Naive thymus-derived CD4-positive, alpha-beta T cell (primary cell): ENCODE measurements at regions of chr2 and their contacts with region 1.

Region 1: DNA sequence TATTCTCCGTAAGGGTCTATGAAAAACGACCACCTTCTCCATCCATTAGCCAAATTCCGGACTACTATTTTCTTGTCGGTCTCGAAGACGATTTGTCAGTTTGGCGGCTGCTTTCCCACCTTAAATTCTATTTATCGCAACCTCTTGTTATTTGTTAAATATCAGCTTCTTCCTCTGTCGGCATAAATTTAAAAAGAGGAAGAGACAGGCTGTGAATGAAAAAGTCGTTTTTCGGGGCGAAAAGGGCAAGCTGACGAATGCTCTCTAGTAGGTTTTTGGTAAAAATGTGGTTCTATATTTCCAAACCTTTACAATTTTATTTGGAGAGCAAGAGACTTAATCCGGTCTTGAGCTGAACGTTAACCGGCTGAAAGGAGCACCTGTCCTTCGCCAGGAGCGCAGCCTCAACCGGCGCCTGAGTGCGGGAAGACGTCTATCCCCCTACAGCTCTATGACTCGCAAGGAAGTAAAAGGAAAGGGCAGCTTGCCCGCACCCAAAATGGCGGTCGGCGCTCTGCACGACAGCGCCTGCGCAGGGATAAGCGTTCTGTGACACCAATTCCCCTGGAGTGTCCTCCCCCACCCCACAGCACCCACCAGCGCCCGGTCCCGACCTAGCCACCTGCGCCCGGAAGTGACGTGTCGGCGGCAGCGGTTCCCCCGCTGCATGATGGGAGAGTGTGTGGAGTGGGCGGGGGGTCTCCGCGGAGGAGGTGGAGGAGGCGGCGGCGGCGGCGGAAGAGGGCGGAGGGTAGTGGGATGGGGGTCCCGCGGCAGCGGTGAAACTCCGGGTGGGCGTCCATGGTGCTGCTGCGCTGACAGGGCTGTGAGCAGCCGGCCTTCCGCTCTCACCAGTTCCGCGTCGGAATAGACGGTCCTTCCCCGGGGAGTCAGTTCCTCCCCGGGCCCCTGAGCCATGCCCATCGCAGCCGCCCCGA is at the start of gene AFTPH:
- DNase-seq: peak; percentile 96 to 100 (median 99)
- ATAC-seq: peak; percentile 98
- H3K4me3 ChIP-seq: peak within 1 kb of the TSS; percentile 99
- H3K4me3 Mint-ChIP-seq: peak within 1 kb of the TSS; percentile 94 to 100 (median 99)
- H3K27ac ChIP-seq: peak within 1 kb of the TSS; percentile 85
- H3K27ac Mint-ChIP-seq: peak within 1 kb of the TSS; percentile 93 to 99 (median 99)
- H3K4me1 ChIP-seq: peaks cover 22 to 25% of the 10 kb centered on the region in 2 donors
- H3K4me1 Mint-ChIP-seq: peaks cover 10 to 51% (median 43%) of the 10 kb centered on the region in 7 donors
- H3K27me3 ChIP-seq: no peaks in the 10 kb centered on the region
- H3K27me3 Mint-ChIP-seq: peaks cover 0 to 12% (median 0%) of the 10 kb centered on the region in 5 donors
- total RNA-seq, gene AFTPH: 25.2 to 46.2 (median 37.0) TPM

Region 2: GRCh38 chr2:62705007-62705829 is 1818.7 kb before region 1 on chr2 and contains the start of gene EHBP1:
- CTCF ChIA-PET with region 1: no interaction called
- POLR2A ChIA-PET with region 1: no interaction called
- intact Hi-C with region 1: loop called in 1 of 2 experiments (anchors 10 kb)
- DNase-seq: peak; percentile 95 to 99 (median 98)
- ATAC-seq: peak; percentile 98
- H3K4me3 ChIP-seq: peak within 1 kb of the TSS; percentile 82
- H3K4me3 Mint-ChIP-seq: peak within 1 kb of the TSS; percentile 83 to 98 (median 92)
- H3K27ac ChIP-seq: peak within 1 kb of the TSS; percentile 72
- H3K27ac Mint-ChIP-seq: peak within 1 kb of the TSS; percentile 76 to 93 (median 84)
- H3K4me1 ChIP-seq: peaks cover 0 to 25% of the 10 kb centered on the region in 2 donors
- H3K4me1 Mint-ChIP-seq: peaks cover 24 to 48% (median 31%) of the 10 kb centered on the region in 7 donors
- H3K27me3 ChIP-seq: no peaks in the 10 kb centered on the region
- H3K27me3 Mint-ChIP-seq: peaks cover 0 to 13% (median 0%) of the 10 kb centered on the region in 5 donors
- total RNA-seq, gene EHBP1: 23.8 to 31.5 (median 30.0) TPM

Region 3: GRCh38 chr2:64052468-64053241 is 471.3 kb before region 1 on chr2:
- CTCF ChIA-PET with region 1: interaction called, 6 read pairs
- POLR2A ChIA-PET with region 1: no interaction called
- intact Hi-C with region 1: loop called (anchors 1 kb)
- DNase-seq: peak in 7 of 9 donors; percentile 14 to 63 (median 44)
- ATAC-seq: peak; percentile 48
- H3K4me3 ChIP-seq: no peak overlapping the region
- H3K4me3 Mint-ChIP-seq: peak overlapping the region in 9 of 10 donors; percentile 23 to 68 (median 53)
- H3K27ac ChIP-seq: no peak overlapping the region
- H3K27ac Mint-ChIP-seq: peak overlapping the region in 8 of 9 donors; percentile 38 to 92 (median 85)
- H3K4me1 ChIP-seq: peaks cover 3 to 37% of the 10 kb centered on the region in 2 donors
- H3K4me1 Mint-ChIP-seq: peaks cover 35 to 62% (median 54%) of the 10 kb centered on the region in 7 donors
- H3K27me3 ChIP-seq: no peaks in the 10 kb centered on the region
- H3K27me3 Mint-ChIP-seq: peaks cover 0 to 3% (median 0%) of the 10 kb centered on the region in 5 donors

Region 4: DNA sequence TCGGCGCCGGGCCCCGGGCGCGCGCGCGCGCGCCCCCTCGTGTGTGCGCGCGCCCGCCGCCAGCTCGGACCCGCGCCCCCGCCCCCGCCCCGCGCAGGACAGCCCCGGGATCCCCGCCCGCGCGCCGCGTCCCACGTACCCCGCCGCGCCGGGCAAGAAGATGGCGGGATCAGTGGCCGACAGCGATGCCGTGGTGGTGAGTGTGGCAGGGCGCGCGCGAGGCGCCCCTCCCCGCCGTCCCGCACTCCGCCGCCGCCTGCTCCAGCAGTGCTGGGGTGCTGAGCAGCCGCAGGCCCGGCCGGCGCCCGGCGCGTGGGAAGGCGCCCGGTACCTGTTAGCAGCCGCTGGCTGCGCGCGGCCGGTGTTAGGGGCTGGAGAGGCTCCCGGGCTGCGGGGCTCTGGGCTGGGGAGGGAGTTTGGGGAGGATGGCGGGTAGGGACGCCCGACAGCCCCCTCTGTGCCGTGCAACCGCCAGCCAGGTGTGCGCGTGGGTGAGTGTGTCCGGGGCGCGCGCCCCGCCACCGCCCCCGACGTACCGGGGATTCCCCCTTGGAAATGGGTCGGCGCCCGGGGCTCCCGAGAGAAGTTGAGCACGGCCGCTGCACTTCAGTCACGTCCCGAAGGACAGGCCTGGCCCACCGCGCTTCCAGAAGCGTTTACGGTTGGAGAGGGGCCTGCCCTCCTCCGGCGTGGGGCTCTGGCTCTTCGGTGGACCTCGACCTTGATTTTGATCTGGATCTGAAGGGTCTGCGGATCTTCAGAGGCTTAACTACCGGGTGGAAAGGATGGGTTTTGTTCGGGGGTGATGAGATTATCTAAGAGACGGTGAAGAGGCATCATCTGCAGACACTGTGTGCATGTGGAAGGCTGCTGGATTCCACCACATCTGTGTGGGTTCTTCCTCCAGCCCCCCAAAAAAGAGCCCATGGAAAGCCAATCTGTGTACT is 69.3 kb before region 1 on chr2:
- CTCF ChIA-PET with region 1: no interaction called
- POLR2A ChIA-PET with region 1: no interaction called
- intact Hi-C with region 1: no loop called
- DNase-seq: peak; percentile 14 to 68 (median 43)
- ATAC-seq: peak; percentile 82
- H3K4me3 ChIP-seq: peak overlapping the region; percentile 44
- H3K4me3 Mint-ChIP-seq: peak overlapping the region; percentile 75 to 91 (median 86)
- H3K27ac ChIP-seq: no peak overlapping the region
- H3K27ac Mint-ChIP-seq: peak overlapping the region in 7 of 9 donors; percentile 34 to 84 (median 62)
- H3K4me1 ChIP-seq: peaks cover 0 to 4% of the 10 kb centered on the region in 2 donors
- H3K4me1 Mint-ChIP-seq: peaks cover 0 to 16% (median 11%) of the 10 kb centered on the region in 7 donors
- H3K27me3 ChIP-seq: peaks cover 0 to 2% of the 10 kb centered on the region in 2 donors
- H3K27me3 Mint-ChIP-seq: peaks cover 0 to 50% (median 8%) of the 10 kb centered on the region in 5 donors

Region 5: GRCh38 chr2:64586883-64587481 is 63.0 kb after region 1 on chr2:
- CTCF ChIA-PET with region 1: no interaction called
- POLR2A ChIA-PET with region 1: interaction called, 4 read pairs
- intact Hi-C with region 1: loop called in 1 of 2 experiments (anchors 1 kb)
- DNase-seq: peak in 6 of 9 donors; percentile 30 to 55 (median 42)
- ATAC-seq: peak; percentile 72
- H3K4me3 ChIP-seq: no peak overlapping the region
- H3K4me3 Mint-ChIP-seq: no peak overlapping the region
- H3K27ac ChIP-seq: no peak overlapping the region
- H3K27ac Mint-ChIP-seq: peak overlapping the region in 1 of 9 donors; percentile 64
- H3K4me1 ChIP-seq: no peaks in the 10 kb centered on the region
- H3K4me1 Mint-ChIP-seq: peaks cover 0 to 14% (median 5%) of the 10 kb centered on the region in 7 donors
- H3K27me3 ChIP-seq: no peaks in the 10 kb centered on the region
- H3K27me3 Mint-ChIP-seq: no peaks in the 10 kb centered on the region

Region 6: GRCh38 chr2:64750817-64751285 is 226.9 kb after region 1 on chr2:
- CTCF ChIA-PET with region 1: no interaction called
- POLR2A ChIA-PET with region 1: interaction called, 12 read pairs
- intact Hi-C with region 1: loop called (anchors 1 kb)
- DNase-seq: peak in 8 of 9 donors; percentile 87 to 97 (median 96)
- ATAC-seq: peak; percentile 90
- H3K4me3 ChIP-seq: peak overlapping the region; percentile 98
- H3K4me3 Mint-ChIP-seq: peak overlapping the region; percentile 91 to 100 (median 99)
- H3K27ac ChIP-seq: peak overlapping the region; percentile 91
- H3K27ac Mint-ChIP-seq: peak overlapping the region; percentile 91 to 99 (median 96)
- H3K4me1 ChIP-seq: peaks cover 3 to 13% of the 10 kb centered on the region in 2 donors
- H3K4me1 Mint-ChIP-seq: peaks cover 5 to 34% (median 29%) of the 10 kb centered on the region in 7 donors
- H3K27me3 ChIP-seq: no peaks in the 10 kb centered on the region
- H3K27me3 Mint-ChIP-seq: no peaks in the 10 kb centered on the region

Region 7: GRCh38 chr2:64914735-64915509 is 391.0 kb after region 1 on chr2:
- CTCF ChIA-PET with region 1: no interaction called
- POLR2A ChIA-PET with region 1: no interaction called
- intact Hi-C with region 1: loop called in 1 of 2 experiments (anchors 1 kb)
- DNase-seq: no peak
- ATAC-seq: peak; percentile 51
- H3K4me3 ChIP-seq: no peak overlapping the region
- H3K4me3 Mint-ChIP-seq: no peak overlapping the region
- H3K27ac ChIP-seq: no peak overlapping the region
- H3K27ac Mint-ChIP-seq: peak overlapping the region in 1 of 9 donors; percentile 34
- H3K4me1 ChIP-seq: peaks cover 6 to 15% of the 10 kb centered on the region in 2 donors
- H3K4me1 Mint-ChIP-seq: peaks cover 6 to 33% (median 20%) of the 10 kb centered on the region in 7 donors
- H3K27me3 ChIP-seq: no peaks in the 10 kb centered on the region
- H3K27me3 Mint-ChIP-seq: no peaks in the 10 kb centered on the region

Region 8: GRCh38 chr2:65227425-65228262 is 703.7 kb after region 1 on chr2 and contains the start of gene ACTR2:
- CTCF ChIA-PET with region 1: no interaction called
- POLR2A ChIA-PET with region 1: interaction called, 6 read pairs
- intact Hi-C with region 1: loop called (anchors 1 kb)
- DNase-seq: peak; percentile 86 to 94 (median 93)
- ATAC-seq: peak; percentile 97
- H3K4me3 ChIP-seq: peak within 1 kb of the TSS; percentile 99
- H3K4me3 Mint-ChIP-seq: peak within 1 kb of the TSS; percentile 95 to 100 (median 98)
- H3K27ac ChIP-seq: peak within 1 kb of the TSS; percentile 97
- H3K27ac Mint-ChIP-seq: peak within 1 kb of the TSS; percentile 97 to 99 (median 98)
- H3K4me1 ChIP-seq: peaks cover 25 to 38% of the 10 kb centered on the region in 2 donors
- H3K4me1 Mint-ChIP-seq: peaks cover 24 to 54% (median 44%) of the 10 kb centered on the region in 7 donors
- H3K27me3 ChIP-seq: no peaks in the 10 kb centered on the region
- H3K27me3 Mint-ChIP-seq: no peaks in the 10 kb centered on the region
- total RNA-seq, gene ACTR2: 180 to 435 (median 287) TPM

Region 9: GRCh38 chr2:66013465-66013864 is 1489.5 kb after region 1 on chr2:
- CTCF ChIA-PET with region 1: no interaction called
- POLR2A ChIA-PET with region 1: no interaction called
- intact Hi-C with region 1: no loop called
- DNase-seq: no peak
- ATAC-seq: no peak
- H3K4me3 ChIP-seq: no peak overlapping the region
- H3K4me3 Mint-ChIP-seq: no peak overlapping the region
- H3K27ac ChIP-seq: no peak overlapping the region
- H3K27ac Mint-ChIP-seq: no peak overlapping the region
- H3K4me1 ChIP-seq: no peaks in the 10 kb centered on the region
- H3K4me1 Mint-ChIP-seq: no peaks in the 10 kb centered on the region
- H3K27me3 ChIP-seq: no peaks in the 10 kb centered on the region
- H3K27me3 Mint-ChIP-seq: peaks cover 0 to 13% (median 5%) of the 10 kb centered on the region in 5 donors